Gastrocnemius medialis (tissue), 4 donors: ENCODE measurements at regions of chr3 and their contacts with region 1.

Region 1: GRCh38 chr3:188664795-188665194 is 507.0 kb upstream of the TPRG1 start:
- DNase-seq: no peak
- ATAC-seq: peak in 1 of 2 donors; percentile 61
- H3K4me3 ChIP-seq: no peak overlapping the region
- H3K27ac ChIP-seq: no peak overlapping the region
- H3K4me1 ChIP-seq: peaks cover 14 to 15% of the 10 kb centered on the region in 2 donors
- H3K27me3 ChIP-seq: no peaks in the 10 kb centered on the region
- CTCF ChIP-seq: peak in 1 of 5 experiments; percentile 32
- POLR2A ChIP-seq: no peak

Region 2: DNA sequence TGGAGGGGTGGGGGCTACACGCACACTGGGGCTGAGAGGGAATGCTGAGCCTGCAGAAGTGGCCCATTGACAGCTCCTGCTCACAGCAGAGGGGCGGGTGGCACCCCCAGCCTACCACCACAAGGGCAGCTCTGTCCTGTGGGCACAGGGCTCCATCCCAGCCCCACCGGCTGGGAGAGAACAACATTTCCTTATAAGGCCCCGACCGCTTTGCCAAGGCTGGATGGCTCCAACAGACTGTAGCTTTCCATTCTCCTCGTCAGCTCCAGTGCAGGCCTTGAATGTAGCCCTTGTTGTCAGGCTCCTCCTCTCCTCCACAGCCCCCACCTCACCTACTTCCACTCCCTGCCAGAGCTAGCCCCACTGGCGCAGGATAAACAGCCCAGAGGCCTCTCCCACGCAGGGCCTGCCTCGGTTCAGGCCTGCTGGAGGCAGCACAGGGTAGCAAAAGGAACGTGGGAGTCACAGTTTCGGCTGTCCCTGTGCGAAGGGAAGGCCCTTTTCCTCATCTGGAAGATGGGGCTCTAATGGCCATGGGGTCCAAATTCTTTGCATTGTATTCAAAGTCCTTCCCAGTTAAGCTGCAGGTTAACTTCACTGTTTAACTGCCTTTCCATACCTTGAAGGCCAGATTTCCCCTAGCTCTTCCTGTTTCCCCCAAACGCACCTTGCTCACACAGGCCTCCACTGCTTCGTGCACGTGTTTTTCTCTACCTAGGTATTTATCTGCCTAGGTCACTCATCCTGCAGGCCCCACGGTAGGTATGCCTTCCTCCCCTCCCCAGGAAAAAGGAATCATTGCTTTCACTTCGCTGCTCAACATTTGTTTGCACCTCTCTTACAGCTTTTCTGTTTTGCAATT is 612.4 kb before region 1 on chr3:
- in situ Hi-C with region 1: no loop called
- intact Hi-C with region 1: loop called (anchors 10 kb)
- DNase-seq: peak; percentile 72 to 94
- ATAC-seq: peak; percentile 80 to 89
- H3K4me3 ChIP-seq: no peak overlapping the region
- H3K27ac ChIP-seq: peak overlapping the region; percentile 71 to 87 (median 74)
- H3K4me1 ChIP-seq: peaks cover 26% of the 10 kb centered on the region in 2 donors
- H3K27me3 ChIP-seq: no peaks in the 10 kb centered on the region
- CTCF ChIP-seq: peak in 4 of 5 experiments; percentile 32 to 56 (median 47)
- POLR2A ChIP-seq: peak in 1 of 2 donors; percentile 23

Region 3: GRCh38 chr3:188772886-188773285 is 108.1 kb after region 1 on chr3:
- in situ Hi-C with region 1: no loop called
- intact Hi-C with region 1: no loop called
- DNase-seq: no peak
- ATAC-seq: peak in 1 of 2 donors; percentile 56
- H3K4me3 ChIP-seq: no peak overlapping the region
- H3K27ac ChIP-seq: no peak overlapping the region
- H3K4me1 ChIP-seq: peaks cover 13 to 20% of the 10 kb centered on the region in 2 donors
- H3K27me3 ChIP-seq: no peaks in the 10 kb centered on the region
- CTCF ChIP-seq: no peak
- POLR2A ChIP-seq: no peak